ENCODE measurements at regions of chr5 and their contacts with region 1.

Region 1: GRCh38 chr5:78974011-78974410 is 11.1 kb downstream of the ARSB start:
- DNase-seq: no peak
- ATAC-seq: no peak
- H3K4me3 ChIP-seq: no peak overlapping the region
- H3K27ac ChIP-seq: no peak overlapping the region
- H3K4me1 ChIP-seq: no peaks in the 10 kb centered on the region
- H3K27me3 ChIP-seq: peaks cover 12 to 17% of the 10 kb centered on the region in 2 experiments; a peak in 3 of 5 replicates
- CTCF ChIP-seq: no peak
- EP300 ChIP-seq: no peak
- POLR2A ChIP-seq: no peak
- RAD21 ChIP-seq: no peak

Region 2: DNA sequence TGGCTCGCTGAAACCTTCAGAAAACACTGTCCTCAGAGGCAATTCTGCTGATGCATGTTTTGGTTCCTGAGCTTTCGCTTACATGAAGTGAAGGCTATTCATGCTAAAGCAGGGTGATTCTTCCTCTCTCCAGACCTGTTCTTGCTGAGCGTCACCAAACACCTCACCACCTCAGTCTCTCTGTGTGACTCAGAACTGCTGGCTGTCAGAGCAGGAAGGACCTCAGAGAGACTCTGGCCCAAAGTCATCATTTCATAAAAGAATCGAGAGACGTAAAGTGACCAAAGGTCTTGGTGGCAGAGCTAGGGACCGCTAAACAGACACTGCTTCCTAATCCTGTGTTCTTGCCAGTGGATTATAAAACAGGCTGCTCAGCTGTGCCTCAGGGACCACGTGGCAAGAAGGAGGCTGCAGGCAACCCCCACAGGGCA is 399.3 kb before region 1 on chr5:
- CTCF ChIA-PET with region 1: no interaction called
- POLR2A ChIA-PET with region 1: no interaction called
- in situ Hi-C with region 1: no loop called
- intact Hi-C with region 1: no loop called
- DNase-seq: no peak
- ATAC-seq: no peak
- H3K4me3 ChIP-seq: no peak overlapping the region
- H3K27ac ChIP-seq: no peak overlapping the region
- H3K4me1 ChIP-seq: peaks cover 0 to 15% of the 10 kb centered on the region in 2 experiments; a peak in 3 of 5 replicates
- H3K27me3 ChIP-seq: no peaks in the 10 kb centered on the region
- CTCF ChIP-seq: no peak
- EP300 ChIP-seq: no peak
- POLR2A ChIP-seq: no peak
- RAD21 ChIP-seq: no peak

Region 3: DNA sequence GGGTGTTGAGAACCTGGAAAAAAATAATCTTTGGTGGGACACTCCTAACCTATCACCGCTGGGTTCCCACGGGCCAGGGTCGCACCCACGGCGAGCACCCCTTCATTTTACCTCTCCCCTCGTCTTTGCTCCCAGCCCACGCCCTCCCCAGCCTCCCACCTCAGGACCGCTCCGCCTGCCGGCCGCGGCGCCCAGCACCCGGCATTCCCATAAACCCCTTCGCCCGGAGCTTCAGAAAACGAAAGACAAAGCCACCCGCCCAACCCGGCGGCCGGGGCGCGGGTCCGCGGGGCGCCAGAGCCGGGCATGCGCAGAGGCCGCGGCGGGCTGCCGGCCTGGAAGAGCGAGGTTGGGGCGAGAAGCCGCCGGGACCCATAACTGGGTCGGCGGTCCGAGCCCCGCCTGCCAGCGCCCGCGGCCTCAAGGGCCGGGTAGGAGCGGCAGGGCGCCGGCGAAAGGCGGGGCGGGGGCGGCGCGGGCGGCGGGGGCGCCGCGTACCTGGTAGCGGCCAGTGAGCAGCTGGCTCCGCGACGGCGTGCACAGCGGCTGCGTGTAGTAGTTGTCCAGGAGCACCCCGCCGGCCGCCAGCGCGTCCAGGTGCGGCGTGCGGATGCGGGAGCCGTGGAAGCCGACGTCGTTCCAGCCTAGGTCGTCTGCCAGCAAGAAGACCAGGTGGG is 10.6 kb after region 1 on chr5:
- CTCF ChIA-PET with region 1: no interaction called
- POLR2A ChIA-PET with region 1: interaction called, 12 read pairs
- in situ Hi-C with region 1: no loop called
- intact Hi-C with region 1: no loop called
- DNase-seq: peak; percentile 87 to 91 (median 88)
- ATAC-seq: peak; percentile 94
- H3K4me3 ChIP-seq: peak overlapping the region; percentile 75
- H3K27ac ChIP-seq: peak overlapping the region; percentile 80; the same call in 2 of the 3 replicates
- H3K4me1 ChIP-seq: peaks cover 16% of the 10 kb centered on the region in 2 experiments
- H3K27me3 ChIP-seq: 0 out of 5 replicates have a peak, but pooled peaks cover 0 to 2% of the 10 kb centered on the region in 2 experiments
- CTCF ChIP-seq: peak; percentile 25 to 36 (median 27); a peak in 1 of 6 replicates
- EP300 ChIP-seq: no peak
- POLR2A ChIP-seq: peak; percentile 59; the same call in 1 of the 2 replicates
- RAD21 ChIP-seq: no peak